Right ventricle myocardium inferior (tissue), 1 donor: ENCODE measurements at regions of chr4 and their contacts with region 1.

Region 1: GRCh38 chr4:1167247-1167949 is 5.0 kb downstream of the SPON2 start:
- DNase-seq: peak; percentile 92
- ATAC-seq: peak; percentile 84

Region 2: GRCh38 chr4:1207603-1208265 is 40.3 kb after region 1 on chr4:
- intact Hi-C with region 1: loop called (anchors 5 kb)
- DNase-seq: peak; percentile 84
- ATAC-seq: peak; percentile 66

Region 3: DNA sequence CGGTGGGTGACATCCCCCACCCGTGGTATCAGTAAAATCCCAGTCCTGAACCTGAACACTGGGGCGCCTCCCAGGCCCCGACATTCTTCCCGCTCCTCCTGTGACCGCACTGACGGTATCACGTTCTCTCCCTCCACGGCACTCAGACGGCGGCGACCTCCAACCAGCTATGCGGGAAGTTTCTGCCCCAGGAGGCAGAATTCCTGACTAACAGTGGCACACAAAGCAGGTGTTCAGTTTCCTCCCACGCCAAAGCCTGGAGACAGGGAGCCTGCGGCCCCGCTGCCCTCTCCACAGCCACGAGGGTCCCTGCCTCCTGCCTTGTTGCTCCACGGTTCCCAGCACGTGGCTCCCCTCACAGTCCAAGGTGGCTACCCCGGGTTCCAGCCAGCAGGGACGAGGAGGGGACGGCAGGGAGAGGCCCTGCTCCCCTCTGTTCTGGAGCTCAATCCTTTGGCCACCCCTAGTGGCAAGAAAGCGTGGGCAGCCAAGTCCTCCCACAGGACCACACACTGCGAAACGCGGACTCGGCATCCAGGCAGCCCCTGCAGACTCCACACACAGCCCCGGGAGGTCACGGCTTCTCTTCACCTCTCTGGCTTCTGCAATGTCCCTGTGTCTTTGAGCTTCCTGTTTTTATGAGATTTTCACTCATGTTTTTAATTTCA is 66.4 kb after region 1 on chr4:
- intact Hi-C with region 1: loop called (anchors 5 kb)
- DNase-seq: peak; percentile 70
- ATAC-seq: peak; percentile 70

Region 4: DNA sequence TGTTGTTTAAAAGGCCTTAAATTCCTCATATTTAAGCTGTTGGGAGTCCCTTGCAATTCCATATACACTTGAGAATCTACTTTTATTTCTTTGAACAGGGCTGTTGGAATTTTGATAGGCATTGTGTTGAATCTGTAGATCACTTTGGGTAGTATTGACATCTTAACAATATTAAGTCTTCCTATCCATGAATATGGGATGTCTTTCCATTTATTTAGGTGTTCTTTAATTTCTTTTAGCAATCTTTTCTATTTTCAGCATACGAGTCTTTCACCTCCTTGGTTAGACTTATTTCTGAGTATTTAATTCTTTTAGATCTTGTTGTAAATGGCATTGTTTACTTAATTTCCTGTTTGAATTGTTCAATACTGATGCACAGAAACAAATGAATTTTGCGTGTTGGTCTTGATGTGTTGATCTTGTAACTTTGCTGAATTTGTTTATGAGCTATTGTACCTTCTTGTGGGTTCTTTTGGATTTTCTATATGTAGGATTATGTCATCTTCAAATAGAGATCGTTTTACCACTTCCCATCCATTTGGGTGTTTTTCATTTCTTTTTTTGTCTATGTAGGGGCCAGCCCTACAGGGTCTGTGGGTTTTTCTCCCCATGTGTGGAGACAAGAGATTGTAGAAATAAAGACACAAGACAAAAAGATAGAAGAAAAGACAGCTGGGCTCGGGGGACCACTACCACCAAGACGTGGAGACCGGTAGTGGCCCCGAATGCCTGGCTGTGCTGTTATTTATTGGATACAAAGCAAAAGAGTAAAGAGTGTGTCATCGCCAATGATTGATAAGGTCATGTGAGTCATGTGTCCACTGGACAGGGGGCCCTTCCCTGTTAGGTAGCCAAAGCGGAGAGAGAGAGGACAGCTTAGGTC is 99.7 kb after region 1 on chr4:
- intact Hi-C with region 1: loop called (anchors 2 kb)
- DNase-seq: no peak
- ATAC-seq: no peak

Region 5: DNA sequence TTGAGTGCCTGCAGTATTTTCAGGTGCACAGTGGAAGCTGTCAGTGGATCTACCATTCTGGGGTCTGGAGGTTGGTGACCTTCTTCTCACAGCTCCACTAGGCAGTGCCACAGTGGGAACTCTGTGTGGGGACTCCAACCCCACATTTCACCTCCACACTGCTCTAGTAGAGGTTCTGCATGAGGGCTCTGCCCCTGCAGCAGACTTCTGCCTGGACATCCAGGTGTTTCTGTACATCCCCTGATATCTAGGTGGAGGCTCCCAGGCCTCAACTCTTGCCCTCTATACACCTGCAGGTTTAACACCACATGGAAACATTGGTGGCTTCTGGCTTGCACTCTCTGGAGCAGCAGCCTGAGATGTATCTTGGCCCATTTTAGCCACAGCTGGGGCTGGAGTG is 858.4 kb after region 1 on chr4:
- intact Hi-C with region 1: no loop called
- DNase-seq: no peak
- ATAC-seq: no peak